ENCODE measurements at regions of chrX and their contacts with region 1.

Region 1: DNA sequence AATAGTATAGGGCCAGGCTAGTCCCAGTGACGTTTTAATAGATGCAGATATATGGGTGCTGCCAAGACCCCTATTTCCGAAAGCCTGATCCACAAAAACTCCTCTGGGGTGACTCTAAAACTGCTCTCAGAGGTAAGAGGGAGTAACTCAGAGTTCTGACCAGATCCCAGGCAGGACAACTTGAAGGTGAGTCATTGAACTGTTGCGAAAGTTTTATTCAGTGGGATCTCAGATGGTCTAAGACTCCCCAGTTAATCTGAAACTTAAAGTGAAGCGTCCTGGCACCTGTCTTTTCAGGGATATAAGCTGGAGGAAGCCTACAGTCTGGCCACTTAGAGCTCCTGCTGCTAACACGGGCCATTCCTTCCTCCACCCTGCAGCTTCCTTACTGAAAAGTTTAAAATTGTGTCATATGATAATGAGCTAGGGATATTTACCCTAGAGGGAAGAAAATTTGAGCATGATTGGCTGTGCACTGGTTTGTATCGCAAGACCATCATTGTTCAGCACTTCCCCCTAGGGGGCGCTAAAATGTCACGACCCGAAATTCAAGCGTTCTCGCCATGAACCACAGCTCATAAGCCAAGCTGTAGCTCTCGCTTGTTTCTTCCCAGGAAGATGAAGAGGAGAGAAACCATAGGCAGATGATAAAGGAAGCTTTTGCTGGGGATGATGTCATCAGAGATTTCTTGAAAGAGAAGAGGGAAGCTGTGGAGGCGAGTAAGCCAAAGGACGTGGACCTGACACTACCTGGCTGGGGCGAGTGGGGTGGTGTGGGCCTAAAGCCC is 19.5 kb downstream of the UTP14A start:
- DNase-seq: peak; percentile 48 to 55
- H3K4me3 ChIP-seq: no peak overlapping the region
- H3K27ac ChIP-seq: no peak overlapping the region
- H3K4me1 ChIP-seq: no peaks in the 10 kb centered on the region
- H3K27me3 ChIP-seq: peaks cover 0 to 3% of the 10 kb centered on the region in 2 donors
- CTCF ChIP-seq: peak; percentile 48 to 67 (median 58)
- POLR2A ChIP-seq: no peak

Region 2: GRCh38 chrX:129665910-129666644 is 259.4 kb before region 1 on chrX:
- intact Hi-C with region 1: no loop called
- DNase-seq: no peak
- H3K4me3 ChIP-seq: no peak overlapping the region
- H3K27ac ChIP-seq: no peak overlapping the region
- H3K4me1 ChIP-seq: no peaks in the 10 kb centered on the region
- H3K27me3 ChIP-seq: peaks cover 0 to 24% of the 10 kb centered on the region in 2 donors
- CTCF ChIP-seq: no peak
- POLR2A ChIP-seq: no peak

Region 3: GRCh38 chrX:130055103-130055502 is 129.6 kb after region 1 on chrX:
- intact Hi-C with region 1: loop called (anchors 10 kb)
- DNase-seq: no peak
- H3K4me3 ChIP-seq: no peak overlapping the region
- H3K27ac ChIP-seq: no peak overlapping the region
- H3K4me1 ChIP-seq: no peaks in the 10 kb centered on the region
- H3K27me3 ChIP-seq: peaks cover 0 to 14% of the 10 kb centered on the region in 2 donors
- CTCF ChIP-seq: no peak
- POLR2A ChIP-seq: no peak

Measured in breast epithelium (tissue), 4 donors.